Activated T-helper 2 cell treated with anti-CD3 and anti-CD28 coated beads, Interferon-gamma antibody, Interleukin-2, Interleukin-4, amounts not matched to agents 10 μg/mL and 5 μg/mL and 100 μg/mL, durations not matched to agents 14 hours and 24 hours and 36 hours (primary cell): ENCODE measurements at regions of chr14 and their contacts with region 1.

Region 1: DNA sequence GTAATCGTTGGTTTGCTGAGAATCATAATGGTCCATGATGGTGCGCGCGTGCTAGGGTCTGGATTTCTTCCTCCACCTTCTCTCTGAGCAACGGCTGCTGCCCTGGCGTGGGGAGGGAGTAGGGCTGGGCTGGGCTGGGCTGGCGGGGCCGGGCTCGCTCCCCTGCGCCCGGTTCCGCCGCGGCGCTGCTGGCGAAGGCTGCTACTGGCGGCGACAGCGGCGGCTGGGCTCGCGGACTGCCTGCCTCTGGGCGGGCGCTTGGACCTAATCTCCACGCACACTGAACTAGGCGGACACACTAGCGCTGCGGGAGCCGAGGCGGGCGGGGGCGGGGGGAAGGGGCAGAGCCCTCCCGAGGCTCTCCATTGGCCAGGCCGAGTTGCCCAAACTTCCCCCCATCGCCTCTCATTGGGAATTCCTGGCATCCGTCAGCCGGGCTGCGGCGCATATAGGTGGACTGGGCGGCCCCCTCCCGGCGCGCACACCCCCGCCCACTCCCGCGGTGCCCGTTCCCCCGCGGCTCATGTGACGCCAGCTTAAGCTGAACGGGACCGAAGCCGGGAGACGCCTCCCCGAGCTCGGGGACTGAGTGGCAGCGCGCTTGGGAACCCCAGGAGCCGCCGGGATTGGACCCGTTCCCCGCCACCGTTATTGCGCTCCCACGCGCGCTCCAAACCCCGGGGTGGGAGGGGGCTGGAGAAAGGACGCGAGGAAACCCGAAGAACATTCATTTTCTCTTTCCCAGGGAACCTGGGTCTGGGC is at the start of gene ACTN1:
- DNase-seq: peak; percentile 49
- H3K4me3 Mint-ChIP-seq: peak within 1 kb of the TSS; percentile 86
- H3K27ac Mint-ChIP-seq: peak within 1 kb of the TSS; percentile 82
- H3K4me1 Mint-ChIP-seq: peaks cover 24% of the 10 kb centered on the region
- H3K27me3 Mint-ChIP-seq: peaks cover 21% of the 10 kb centered on the region
- total RNA-seq, gene ACTN1: 133 and 134 TPM in 2 replicates

Region 2: DNA sequence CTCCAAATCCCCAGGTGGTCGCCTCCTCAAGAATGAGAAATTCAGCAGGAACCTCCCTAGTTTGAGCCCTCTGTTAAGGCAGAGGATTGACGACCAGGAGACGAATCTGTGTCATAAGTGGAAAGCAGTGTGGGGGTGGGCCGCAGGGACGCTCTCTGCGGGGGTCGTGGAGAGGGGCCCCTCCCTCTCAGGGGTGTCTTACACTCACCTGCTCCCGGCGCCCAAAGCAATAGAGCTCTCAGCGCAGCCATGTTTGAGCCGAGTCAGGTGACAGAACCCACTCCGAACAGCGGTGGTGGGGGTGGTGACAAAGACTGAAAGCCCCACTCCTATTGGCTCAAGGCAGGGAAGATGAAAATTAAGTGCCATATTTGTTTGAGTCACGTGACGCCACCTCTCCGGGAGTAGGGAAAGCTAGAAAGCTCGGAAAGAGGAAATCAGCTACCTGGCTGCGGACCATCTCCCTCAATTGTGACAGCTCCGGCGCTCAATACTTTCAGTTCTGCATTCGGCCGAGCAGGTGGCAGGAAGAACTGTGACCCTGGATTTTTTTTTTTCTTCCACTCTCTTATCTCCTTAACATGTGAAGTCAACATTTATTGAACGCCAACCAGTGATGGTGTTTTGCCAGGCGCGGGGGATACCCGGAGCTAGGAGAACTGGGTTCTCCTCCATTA is 1162.7 kb before region 1 on chr14 and contains the start of gene ZFYVE26:
- intact Hi-C with region 1: loop called (anchors 1 kb)
- DNase-seq: peak; percentile 89
- H3K4me3 Mint-ChIP-seq: peak within 1 kb of the TSS; percentile 87
- H3K27ac Mint-ChIP-seq: peak within 1 kb of the TSS; percentile 94
- H3K4me1 Mint-ChIP-seq: peaks cover 38% of the 10 kb centered on the region
- H3K27me3 Mint-ChIP-seq: no peaks in the 10 kb centered on the region
- total RNA-seq, gene ZFYVE26: 16.0 and 16.2 TPM in 2 replicates

Region 3: GRCh38 chr14:68874746-68875155 is 104.5 kb before region 1 on chr14:
- intact Hi-C with region 1: no loop called
- DNase-seq: no peak
- H3K4me3 Mint-ChIP-seq: no peak overlapping the region
- H3K27ac Mint-ChIP-seq: no peak overlapping the region
- H3K4me1 Mint-ChIP-seq: no peaks in the 10 kb centered on the region
- H3K27me3 Mint-ChIP-seq: no peaks in the 10 kb centered on the region

Region 4: DNA sequence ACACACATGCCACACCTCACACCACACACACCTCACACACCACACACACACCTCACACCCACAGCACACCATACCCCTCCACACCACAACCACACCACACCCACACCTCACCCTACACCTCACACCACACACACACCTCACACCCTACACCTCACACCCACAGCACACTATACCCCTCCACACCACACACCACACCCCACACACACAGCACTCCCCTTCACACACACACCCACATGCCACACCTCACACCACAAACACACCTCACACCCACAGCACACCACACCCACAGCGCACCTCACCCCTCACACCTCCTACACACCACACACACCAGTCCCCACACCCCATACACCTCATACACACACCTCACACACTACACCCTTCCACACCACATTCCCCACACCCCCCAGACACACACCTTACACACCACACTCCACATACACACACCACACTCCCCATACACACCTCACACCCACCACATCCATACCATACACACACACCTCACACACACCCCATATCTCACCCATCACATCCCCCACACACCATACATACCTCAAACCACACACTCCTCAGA is 80.1 kb before region 1 on chr14:
- intact Hi-C with region 1: no loop called
- DNase-seq: no peak
- H3K4me3 Mint-ChIP-seq: no peak overlapping the region
- H3K27ac Mint-ChIP-seq: peak overlapping the region; percentile 31
- H3K4me1 Mint-ChIP-seq: peaks cover 26% of the 10 kb centered on the region
- H3K27me3 Mint-ChIP-seq: no peaks in the 10 kb centered on the region

Region 5: DNA sequence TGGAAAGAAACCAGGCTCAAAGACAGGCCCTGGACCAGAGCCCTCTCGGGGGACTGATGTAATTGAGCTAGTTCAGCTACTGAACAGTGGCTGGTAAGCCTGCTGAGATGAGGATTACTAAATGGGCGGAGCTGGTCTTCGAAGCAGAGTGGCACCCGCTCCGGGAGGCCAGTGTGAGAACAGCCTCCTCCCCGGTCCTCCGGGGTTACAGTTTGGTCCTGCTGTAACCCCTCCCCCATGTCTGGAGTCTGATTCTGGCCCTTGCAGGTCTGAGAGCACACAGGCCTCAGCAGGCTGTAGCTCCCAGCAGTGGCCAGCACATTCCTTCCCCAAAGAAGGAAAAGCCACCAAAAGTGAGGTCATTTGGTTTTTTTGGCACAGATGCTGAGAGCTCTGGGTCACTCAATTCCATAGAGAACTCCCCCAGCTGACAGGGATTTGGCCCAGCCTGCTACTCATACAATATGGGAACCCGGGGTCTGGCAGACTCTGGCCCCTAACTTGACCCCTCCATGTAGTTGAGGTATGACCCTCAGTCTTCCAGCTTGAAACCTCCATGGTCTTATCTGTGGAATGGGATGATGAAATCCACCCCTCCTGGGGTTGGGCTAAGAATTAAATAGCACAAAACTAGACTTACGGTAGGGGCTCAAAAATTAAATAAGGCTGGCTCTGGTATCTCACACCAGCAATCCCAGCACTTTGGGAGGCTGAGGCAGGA is 39.1 kb before region 1 on chr14:
- intact Hi-C with region 1: loop called (anchors 5 kb)
- DNase-seq: no peak
- H3K4me3 Mint-ChIP-seq: no peak overlapping the region
- H3K27ac Mint-ChIP-seq: no peak overlapping the region
- H3K4me1 Mint-ChIP-seq: peaks cover 12% of the 10 kb centered on the region
- H3K27me3 Mint-ChIP-seq: no peaks in the 10 kb centered on the region

Region 6: DNA sequence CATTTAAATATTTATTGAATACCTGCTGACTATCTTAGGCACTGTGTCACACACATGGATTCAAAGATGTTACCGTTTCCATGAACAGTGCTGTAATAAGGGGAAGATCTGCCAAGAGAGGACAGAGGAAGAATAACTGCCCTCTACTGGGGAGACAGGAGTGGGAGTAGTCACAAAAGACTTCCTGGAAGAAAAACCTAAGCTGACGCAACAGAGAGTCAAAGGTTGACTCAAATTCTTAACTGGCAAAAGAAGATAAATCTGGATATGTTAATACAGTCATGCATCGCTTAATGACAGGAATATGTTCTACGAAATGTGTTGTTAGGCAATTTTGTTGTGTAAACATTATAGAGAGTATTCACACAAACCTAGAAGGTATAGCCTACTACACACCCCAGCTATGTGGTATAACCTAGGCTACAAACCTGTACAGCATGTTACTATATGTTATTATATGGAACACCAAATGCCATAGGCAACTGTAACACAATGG is 122.2 kb after region 1 on chr14:
- intact Hi-C with region 1: loop called (anchors 2 kb)
- DNase-seq: no peak
- H3K4me3 Mint-ChIP-seq: no peak overlapping the region
- H3K27ac Mint-ChIP-seq: peak overlapping the region; percentile 24
- H3K4me1 Mint-ChIP-seq: peaks cover 8% of the 10 kb centered on the region
- H3K27me3 Mint-ChIP-seq: no peaks in the 10 kb centered on the region

Region 7: GRCh38 chr14:69117020-69117767 is 138.0 kb after region 1 on chr14:
- intact Hi-C with region 1: no loop called
- DNase-seq: no peak
- H3K4me3 Mint-ChIP-seq: no peak overlapping the region
- H3K27ac Mint-ChIP-seq: no peak overlapping the region
- H3K4me1 Mint-ChIP-seq: peaks cover 18% of the 10 kb centered on the region
- H3K27me3 Mint-ChIP-seq: no peaks in the 10 kb centered on the region

Region 8: DNA sequence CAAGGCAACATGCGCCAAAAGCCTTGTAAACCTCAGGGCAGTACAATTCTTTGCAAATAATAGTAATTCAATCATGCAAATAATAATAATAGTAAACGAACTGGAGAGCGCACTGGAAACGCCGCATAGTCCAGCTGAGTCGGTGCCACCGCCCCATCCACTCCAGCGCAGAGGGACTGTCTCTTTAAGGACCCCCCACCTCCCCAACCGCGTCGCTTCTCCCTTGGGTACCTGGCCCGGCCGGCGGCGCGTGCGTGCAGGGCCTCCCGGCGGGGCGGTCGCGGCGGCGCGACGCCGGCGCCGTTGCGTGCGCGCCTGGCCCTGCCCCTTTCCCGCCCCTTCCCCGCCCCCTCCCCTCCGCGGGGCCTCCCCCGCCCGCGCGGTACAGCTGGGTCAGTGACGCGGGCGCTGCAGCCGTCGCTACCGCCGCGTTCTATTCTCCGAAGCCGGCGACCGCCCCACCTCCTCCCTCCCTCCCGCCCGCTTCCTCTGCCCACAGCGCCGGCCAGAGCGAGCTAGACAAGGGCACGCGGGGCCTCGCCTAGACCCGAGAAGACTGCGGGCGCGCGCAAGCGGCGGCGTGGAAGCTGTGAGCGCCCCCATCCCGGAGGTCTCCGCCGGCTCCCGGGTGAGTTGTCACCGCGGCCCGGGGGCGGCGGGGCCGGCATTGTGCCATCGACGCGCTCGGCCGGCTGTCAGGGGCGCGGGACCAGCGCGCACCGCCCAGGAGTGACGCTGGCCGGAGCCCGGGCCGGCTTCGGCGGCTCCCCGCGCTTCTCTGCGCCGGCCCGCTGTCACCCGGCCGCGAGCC is 632.2 kb after region 1 on chr14 and contains the start of gene SUSD6:
- intact Hi-C with region 1: loop called (anchors 10 kb)
- DNase-seq: peak; percentile 80
- H3K4me3 Mint-ChIP-seq: peak within 1 kb of the TSS; percentile 94
- H3K27ac Mint-ChIP-seq: peak within 1 kb of the TSS; percentile 97
- H3K4me1 Mint-ChIP-seq: peaks cover 52% of the 10 kb centered on the region
- H3K27me3 Mint-ChIP-seq: no peaks in the 10 kb centered on the region
- total RNA-seq, gene SUSD6: 46.6 and 46.7 TPM in 2 replicates